MCF 10A (cell line): ENCODE measurements at regions of chr1 and their contacts with region 1.

Region 1: GRCh38 chr1:158998781-158999161 is 10.9 kb upstream of the IFI16 start:
- DNase-seq: peak; percentile 81
- H3K4me3 Mint-ChIP-seq: peak overlapping the region; percentile 65
- H3K27ac Mint-ChIP-seq: peak overlapping the region; percentile 63
- H3K4me1 Mint-ChIP-seq: peaks cover 22% of the 10 kb centered on the region
- H3K27me3 Mint-ChIP-seq: no peaks in the 10 kb centered on the region
- CTCF ChIP-seq: peak; percentile 95

Region 2: GRCh38 chr1:158506369-158506987 is 492.3 kb before region 1 on chr1:
- CTCF ChIA-PET with region 1: interaction called, 5 read pairs
- POLR2A ChIA-PET with region 1: no interaction called
- intact Hi-C with region 1: loop called (anchors 1 kb)
- DNase-seq: peak; percentile 61
- H3K4me3 Mint-ChIP-seq: no peak overlapping the region
- H3K27ac Mint-ChIP-seq: no peak overlapping the region
- H3K4me1 Mint-ChIP-seq: no peaks in the 10 kb centered on the region
- H3K27me3 Mint-ChIP-seq: peaks cover 83% of the 10 kb centered on the region
- CTCF ChIP-seq: peak; percentile 63

Region 3: GRCh38 chr1:158527190-158527815 is 471.5 kb before region 1 on chr1:
- CTCF ChIA-PET with region 1: interaction called, 3 read pairs
- POLR2A ChIA-PET with region 1: no interaction called
- intact Hi-C with region 1: loop called (anchors 5 kb)
- DNase-seq: peak; percentile 53
- H3K4me3 Mint-ChIP-seq: no peak overlapping the region
- H3K27ac Mint-ChIP-seq: no peak overlapping the region
- H3K4me1 Mint-ChIP-seq: no peaks in the 10 kb centered on the region
- H3K27me3 Mint-ChIP-seq: peaks cover 100% of the 10 kb centered on the region
- CTCF ChIP-seq: peak; percentile 93

Region 4: DNA sequence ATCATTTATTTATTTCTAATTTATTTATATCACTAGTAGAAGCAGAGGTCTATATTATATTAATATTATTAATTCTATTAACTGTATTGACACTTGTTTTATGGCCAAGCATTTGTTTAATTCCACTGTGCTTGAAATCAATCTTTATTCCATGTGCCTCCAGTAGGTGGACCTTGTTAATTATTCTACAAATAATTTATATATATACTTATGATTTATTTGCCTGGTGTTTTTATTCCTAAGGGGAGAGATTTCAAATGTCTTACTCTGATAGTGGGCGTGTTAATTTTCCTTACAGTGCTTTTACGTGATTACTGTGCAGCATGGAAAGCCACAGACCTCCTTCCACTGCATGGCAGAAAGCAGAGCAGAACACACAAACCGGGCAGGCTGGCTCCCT is 200.2 kb before region 1 on chr1:
- CTCF ChIA-PET with region 1: interaction called, 9 read pairs
- POLR2A ChIA-PET with region 1: no interaction called
- intact Hi-C with region 1: loop called (anchors 1 kb)
- DNase-seq: no peak
- H3K4me3 Mint-ChIP-seq: no peak overlapping the region
- H3K27ac Mint-ChIP-seq: no peak overlapping the region
- H3K4me1 Mint-ChIP-seq: no peaks in the 10 kb centered on the region
- H3K27me3 Mint-ChIP-seq: peaks cover 89% of the 10 kb centered on the region
- CTCF ChIP-seq: peak; percentile 37

Region 5: DNA sequence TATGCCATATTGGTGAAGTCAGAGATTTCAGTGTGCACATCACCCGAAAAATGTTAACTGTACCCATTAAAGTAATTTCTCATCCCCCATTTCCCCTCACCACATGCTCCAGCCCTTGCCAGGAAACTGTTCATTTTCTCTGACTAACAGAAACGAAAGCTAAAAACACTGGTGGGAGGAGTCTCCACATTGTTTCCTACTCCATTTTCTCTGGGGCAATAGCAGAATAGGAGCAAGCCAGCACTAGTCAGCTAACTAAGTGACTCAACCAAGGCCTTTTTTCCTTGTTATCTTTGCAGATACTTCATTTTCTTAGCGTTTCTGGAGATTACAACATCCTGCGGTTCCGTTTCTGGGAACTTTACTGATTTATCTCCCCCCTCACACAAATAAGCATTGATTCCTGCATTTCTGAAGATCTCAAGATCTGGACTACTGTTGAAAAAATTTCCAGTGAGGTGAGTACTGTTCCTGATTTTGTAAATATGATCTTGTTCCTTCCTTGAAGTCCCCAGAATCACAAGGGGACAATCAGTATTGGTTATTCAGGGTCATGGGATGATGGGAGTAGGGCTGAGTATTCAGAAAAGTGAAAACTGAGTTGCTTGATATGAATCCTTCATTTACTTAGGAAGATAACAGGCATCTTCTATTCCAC is 11.1 kb after region 1 on chr1 and contains the start of gene IFI16:
- CTCF ChIA-PET with region 1: interaction called, 6 read pairs
- POLR2A ChIA-PET with region 1: interaction called, 120 read pairs
- intact Hi-C with region 1: no loop called
- DNase-seq: peak; percentile 99
- H3K4me3 Mint-ChIP-seq: peak within 1 kb of the TSS; percentile 88
- H3K27ac Mint-ChIP-seq: peak within 1 kb of the TSS; percentile 97
- H3K4me1 Mint-ChIP-seq: peaks cover 53% of the 10 kb centered on the region
- H3K27me3 Mint-ChIP-seq: no peaks in the 10 kb centered on the region
- CTCF ChIP-seq: no peak
- total RNA-seq, gene IFI16: 139 and 163 TPM in 2 replicates

Region 6: GRCh38 chr1:159015440-159015909 is 16.7 kb after region 1 on chr1:
- CTCF ChIA-PET with region 1: interaction called, 4 read pairs
- POLR2A ChIA-PET with region 1: interaction called, 120 read pairs
- intact Hi-C with region 1: no loop called
- DNase-seq: peak; percentile 96
- H3K4me3 Mint-ChIP-seq: peak overlapping the region; percentile 88
- H3K27ac Mint-ChIP-seq: peak overlapping the region; percentile 95
- H3K4me1 Mint-ChIP-seq: peaks cover 69% of the 10 kb centered on the region
- H3K27me3 Mint-ChIP-seq: no peaks in the 10 kb centered on the region
- CTCF ChIP-seq: no peak